Aorta (tissue), 5 donors: ENCODE measurements at regions of chr15 and their contacts with region 1.

Region 1: GRCh38 chr15:78065284-78065872 is 12.1 kb downstream of the TBC1D2B start:
- DNase-seq: peak in 1 of 2 donors; percentile 82
- ATAC-seq: peak; percentile 84
- H3K4me3 ChIP-seq: no peak overlapping the region
- H3K27ac ChIP-seq: peak overlapping the region in 1 of 2 donors; percentile 85
- H3K4me1 ChIP-seq: peaks cover 10 to 13% of the 10 kb centered on the region in 2 donors
- H3K27me3 ChIP-seq: no peaks in the 10 kb centered on the region

Region 2: GRCh38 chr15:77851691-77852090 is 213.7 kb before region 1 on chr15:
- intact Hi-C with region 1: no loop called
- DNase-seq: peak in 1 of 2 donors; percentile 39
- ATAC-seq: no peak
- H3K4me3 ChIP-seq: no peak overlapping the region
- H3K27ac ChIP-seq: no peak overlapping the region
- H3K4me1 ChIP-seq: no peaks in the 10 kb centered on the region
- H3K27me3 ChIP-seq: no peaks in the 10 kb centered on the region

Region 3: GRCh38 chr15:78000091-78000926 is 65.1 kb before region 1 on chr15:
- intact Hi-C with region 1: loop called in 1 of 2 experiments (anchors 5 kb)
- DNase-seq: peak in 1 of 2 donors; percentile 85
- ATAC-seq: peak; percentile 51
- H3K4me3 ChIP-seq: no peak overlapping the region
- H3K27ac ChIP-seq: no peak overlapping the region
- H3K4me1 ChIP-seq: no peaks in the 10 kb centered on the region
- H3K27me3 ChIP-seq: no peaks in the 10 kb centered on the region

Region 4: GRCh38 chr15:78353093-78353492 is 287.7 kb after region 1 on chr15:
- intact Hi-C with region 1: no loop called
- DNase-seq: no peak
- ATAC-seq: no peak
- H3K4me3 ChIP-seq: no peak overlapping the region
- H3K27ac ChIP-seq: no peak overlapping the region
- H3K4me1 ChIP-seq: no peaks in the 10 kb centered on the region
- H3K27me3 ChIP-seq: no peaks in the 10 kb centered on the region